Right ventricle myocardium inferior (tissue), 1 donor: ENCODE measurements at regions of chr3 and their contacts with region 1.

Region 1: GRCh38 chr3:9890249-9891071 is at the start of gene JAGN1:
- DNase-seq: peak; percentile 94
- ATAC-seq: peak; percentile 98
- total RNA-seq, gene JAGN1: 19.1 TPM

Region 2: GRCh38 chr3:9862391-9863057 is 27.9 kb before region 1 on chr3:
- intact Hi-C with region 1: loop called (anchors 2 kb)
- DNase-seq: peak; percentile 84
- ATAC-seq: peak; percentile 87